Posterior vena cava (tissue), 2 donors: ENCODE measurements at regions of chr5 and their contacts with region 1.

Region 1: DNA sequence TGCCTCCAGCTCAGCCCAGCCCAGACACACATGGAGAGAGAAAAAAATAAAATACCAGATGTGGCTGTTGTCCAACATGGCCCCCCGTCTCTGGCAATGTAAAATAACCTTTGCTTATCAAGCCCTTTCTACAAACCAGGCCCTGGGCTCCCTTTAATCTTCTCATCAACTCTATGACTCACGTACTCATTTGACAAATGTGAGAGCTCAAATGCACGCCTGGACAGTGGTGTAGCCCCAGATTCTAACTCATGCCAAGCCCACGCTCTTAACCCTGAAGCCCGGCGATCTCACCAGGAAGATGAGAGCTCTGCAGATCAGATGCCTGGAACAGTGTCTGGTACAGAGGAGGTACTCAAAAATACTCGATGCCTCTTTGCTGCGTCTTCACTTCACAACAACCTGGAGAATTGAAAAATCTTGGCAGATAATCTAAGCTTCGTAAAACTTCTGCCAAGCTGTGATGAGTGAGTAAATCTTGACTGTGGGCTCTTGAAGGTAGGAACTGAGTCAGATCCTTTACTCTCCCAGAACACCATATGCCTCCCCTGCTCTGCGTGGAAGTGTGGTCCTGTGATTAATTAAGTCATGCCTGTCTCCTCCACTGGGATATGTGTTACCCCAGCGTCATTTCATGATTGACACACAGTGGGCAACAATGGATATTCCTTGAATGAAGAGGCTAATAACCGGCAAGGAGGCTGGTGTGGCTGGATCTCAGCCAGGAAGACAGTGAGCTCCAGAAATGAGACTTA is 102.0 kb upstream of the FSTL4 start:
- DNase-seq: no peak

Region 2: DNA sequence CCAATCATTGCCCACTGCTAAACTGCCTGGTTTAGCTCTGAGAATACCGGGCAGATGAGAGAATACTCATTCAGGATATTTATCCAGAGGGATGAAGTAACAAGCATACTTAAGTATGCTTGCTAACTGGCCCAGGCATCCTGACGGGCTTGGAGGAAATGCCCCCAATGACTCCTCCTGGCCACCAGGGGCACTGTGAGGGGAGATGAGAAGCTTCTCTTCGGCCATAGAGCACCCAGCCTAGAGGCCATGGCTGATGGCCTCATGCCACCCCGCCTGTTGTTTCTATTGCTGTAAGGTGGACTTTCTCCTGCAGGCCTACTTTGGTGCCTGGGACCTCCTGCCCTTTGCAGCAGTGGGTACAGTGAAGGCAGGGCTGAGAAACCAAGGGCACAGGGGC is 32.5 kb after region 1 on chr5:
- intact Hi-C with region 1: loop called in 1 of 2 experiments (anchors 1 kb)
- DNase-seq: no peak

Region 3: GRCh38 chr5:135466178-135467050 is 1752.1 kb after region 1 on chr5:
- intact Hi-C with region 1: loop called in 1 of 2 experiments (anchors 5 kb)
- DNase-seq: peak; percentile 94